ENCODE measurements at regions of chr3 and their contacts with region 1.

Region 1: DNA sequence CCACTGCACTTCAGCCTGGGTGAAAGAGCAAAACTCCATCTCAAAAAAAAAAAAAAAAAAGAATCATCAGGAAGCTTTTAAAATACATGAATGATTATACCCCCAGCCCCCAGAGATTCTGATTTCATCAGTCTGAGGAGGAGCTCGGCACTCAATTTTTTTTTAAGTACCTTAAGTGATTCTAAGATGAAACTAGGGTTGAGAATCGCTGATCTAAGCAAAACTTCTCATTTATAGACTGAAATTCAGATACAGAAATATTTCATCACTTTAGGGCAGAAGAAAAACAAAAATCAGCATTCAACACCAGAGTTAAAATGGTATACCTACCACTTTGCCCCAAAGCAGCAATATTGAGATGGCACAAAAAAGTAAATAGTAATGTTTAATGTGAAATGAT is 24.7 kb downstream of the CPA3 start:
- DNase-seq: no peak
- H3K4me3 ChIP-seq: no peak overlapping the region
- H3K4me3 Mint-ChIP-seq: no peak overlapping the region
- H3K27ac Mint-ChIP-seq: no peak overlapping the region
- H3K4me1 ChIP-seq: no peaks in the 10 kb centered on the region
- H3K4me1 Mint-ChIP-seq: no peaks in the 10 kb centered on the region
- H3K27me3 ChIP-seq: no peaks in the 10 kb centered on the region
- H3K27me3 Mint-ChIP-seq: peaks cover 10% of the 10 kb centered on the region
- CTCF ChIP-seq: no peak

Region 2: GRCh38 chr3:148873927-148874326 is 15.9 kb before region 1 on chr3:
- CTCF ChIA-PET with region 1: no interaction called
- POLR2A ChIA-PET with region 1: no interaction called
- intact Hi-C with region 1: loop called (anchors 2 kb)
- DNase-seq: no peak
- H3K4me3 ChIP-seq: no peak overlapping the region
- H3K4me3 Mint-ChIP-seq: no peak overlapping the region
- H3K27ac Mint-ChIP-seq: no peak overlapping the region
- H3K4me1 ChIP-seq: no peaks in the 10 kb centered on the region
- H3K4me1 Mint-ChIP-seq: no peaks in the 10 kb centered on the region
- H3K27me3 ChIP-seq: no peaks in the 10 kb centered on the region; the same call in 1 of the 2 replicates
- H3K27me3 Mint-ChIP-seq: peaks cover 10% of the 10 kb centered on the region
- CTCF ChIP-seq: no peak